A549 (cell line): ENCODE measurements at regions of chr6 and their contacts with region 1.

Region 1: DNA sequence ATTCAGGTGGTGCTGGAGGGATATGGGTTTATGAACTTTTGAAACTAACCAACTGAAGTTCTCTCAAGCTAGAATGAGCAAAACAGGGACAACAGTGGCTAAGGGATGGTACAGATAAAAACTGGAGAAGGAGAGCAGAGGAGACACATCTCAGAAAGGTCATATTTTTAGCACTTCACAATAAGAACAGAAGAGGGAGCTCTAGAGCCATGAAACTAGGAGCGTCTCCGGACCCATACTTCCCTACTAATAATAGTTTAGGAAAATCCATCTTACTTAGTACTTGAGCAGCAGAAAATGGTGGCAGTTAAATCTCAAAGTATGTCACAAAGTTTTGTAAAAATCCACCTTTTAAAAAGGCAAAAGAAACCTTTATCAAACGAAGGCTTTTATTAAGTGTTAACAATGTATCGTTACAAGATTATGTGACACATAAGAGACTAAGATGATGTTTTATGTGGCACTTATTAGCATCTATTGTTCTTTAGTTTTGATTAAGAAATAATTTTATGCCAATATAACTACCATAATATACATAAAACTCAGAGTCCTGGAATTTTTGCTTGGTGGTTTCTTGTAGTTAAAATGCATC is 278.6 kb downstream of the TBC1D32 start:
- DNase-seq: peak; percentile 15 to 42
- ATAC-seq: peak; percentile 92 to 94
- H3K4me3 ChIP-seq: no peak overlapping the region
- H3K27ac ChIP-seq: no peak overlapping the region
- H3K4me1 ChIP-seq: no peaks in the 10 kb centered on the region
- CTCF ChIP-seq: peak; percentile 59
- EP300 ChIP-seq: no peak
- POLR2A ChIP-seq: no peak
- RAD21 ChIP-seq: peak; percentile 72 to 76

Region 2: GRCh38 chr6:121305957-121306607 is 250.4 kb after region 1 on chr6:
- CTCF ChIA-PET with region 1: interaction called, 27 read pairs
- POLR2A ChIA-PET with region 1: no interaction called
- DNase-seq: peak; percentile 2 to 46
- ATAC-seq: peak; percentile 66 to 76; a peak in 3 of 6 replicates
- H3K4me3 ChIP-seq: no peak overlapping the region
- H3K27ac ChIP-seq: no peak overlapping the region
- H3K4me1 ChIP-seq: no peaks in the 10 kb centered on the region
- CTCF ChIP-seq: peak; percentile 57
- EP300 ChIP-seq: no peak
- POLR2A ChIP-seq: no peak
- RAD21 ChIP-seq: peak; percentile 62 to 65